CD4-positive, alpha-beta T cell (primary cell): ENCODE measurements at regions of chr6 and their contacts with region 1.

Region 1: DNA sequence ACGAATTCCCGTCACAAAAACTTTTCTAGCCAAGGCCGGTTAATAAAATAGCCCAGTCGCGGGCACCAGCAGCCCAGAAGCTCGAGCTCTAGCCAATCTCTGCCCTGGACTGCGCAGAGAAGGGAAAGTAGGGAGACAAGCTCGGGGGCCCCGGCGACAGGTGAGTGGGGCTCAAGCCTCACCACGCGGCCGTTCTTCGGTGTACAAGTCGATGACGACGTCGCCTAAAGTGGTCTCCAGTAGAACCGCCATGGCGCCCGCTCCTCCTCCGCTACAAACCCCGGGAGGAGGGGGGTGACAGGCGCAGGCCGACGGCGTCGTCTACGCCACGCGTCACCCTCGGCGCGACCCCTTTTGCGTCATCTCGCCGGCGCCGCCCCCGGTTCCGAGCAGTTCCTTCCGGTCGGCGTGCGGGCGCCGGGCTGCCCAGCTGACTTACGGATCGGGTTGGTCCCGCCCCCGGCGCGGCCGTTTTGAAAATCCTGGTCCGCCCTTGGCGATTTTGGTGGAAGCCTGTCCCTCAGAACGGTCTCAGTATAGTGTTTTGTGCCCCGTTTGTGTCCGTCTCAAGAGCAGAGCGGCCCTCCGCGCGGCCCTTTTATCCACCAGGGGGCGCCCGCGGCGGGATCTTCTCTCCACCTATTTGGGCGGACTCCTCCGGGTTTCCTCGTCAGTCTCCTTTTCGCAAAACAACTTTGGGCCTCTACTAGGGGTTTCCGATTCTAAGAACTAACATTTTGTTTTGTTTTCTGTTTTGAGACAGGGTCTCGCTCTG is at the start of gene PPIL4:
- DNase-seq: peak; percentile 93 to 99 (median 96)
- ATAC-seq: peak; percentile 82
- H3K4me3 ChIP-seq: peak within 1 kb of the TSS; percentile 69
- H3K4me3 Mint-ChIP-seq: peak within 1 kb of the TSS; percentile 99
- H3K27ac ChIP-seq: peak within 1 kb of the TSS; percentile 98 to 99
- H3K27ac Mint-ChIP-seq: peak within 1 kb of the TSS; percentile 96
- H3K4me1 ChIP-seq: peaks cover 21% of the 10 kb centered on the region
- H3K4me1 Mint-ChIP-seq: peaks cover 37% of the 10 kb centered on the region
- H3K27me3 ChIP-seq: no peaks in the 10 kb centered on the region
- H3K27me3 Mint-ChIP-seq: no peaks in the 10 kb centered on the region
- CTCF ChIP-seq: peak; percentile 99
- total RNA-seq, gene PPIL4: 51.8 to 53.5 TPM

Region 2: GRCh38 chr6:149211046-149211571 is 334.8 kb before region 1 on chr6:
- CTCF ChIA-PET with region 1: no interaction called
- POLR2A ChIA-PET with region 1: no interaction called
- intact Hi-C with region 1: no loop called
- DNase-seq: peak in 4 of 14 experiments; percentile 45 to 53 (median 46)
- ATAC-seq: no peak
- H3K4me3 ChIP-seq: no peak overlapping the region
- H3K4me3 Mint-ChIP-seq: no peak overlapping the region
- H3K27ac ChIP-seq: no peak overlapping the region
- H3K27ac Mint-ChIP-seq: peak overlapping the region; percentile 28
- H3K4me1 ChIP-seq: peaks cover 31% of the 10 kb centered on the region
- H3K4me1 Mint-ChIP-seq: peaks cover 23% of the 10 kb centered on the region
- H3K27me3 ChIP-seq: no peaks in the 10 kb centered on the region
- H3K27me3 Mint-ChIP-seq: no peaks in the 10 kb centered on the region
- CTCF ChIP-seq: no peak

Region 3: DNA sequence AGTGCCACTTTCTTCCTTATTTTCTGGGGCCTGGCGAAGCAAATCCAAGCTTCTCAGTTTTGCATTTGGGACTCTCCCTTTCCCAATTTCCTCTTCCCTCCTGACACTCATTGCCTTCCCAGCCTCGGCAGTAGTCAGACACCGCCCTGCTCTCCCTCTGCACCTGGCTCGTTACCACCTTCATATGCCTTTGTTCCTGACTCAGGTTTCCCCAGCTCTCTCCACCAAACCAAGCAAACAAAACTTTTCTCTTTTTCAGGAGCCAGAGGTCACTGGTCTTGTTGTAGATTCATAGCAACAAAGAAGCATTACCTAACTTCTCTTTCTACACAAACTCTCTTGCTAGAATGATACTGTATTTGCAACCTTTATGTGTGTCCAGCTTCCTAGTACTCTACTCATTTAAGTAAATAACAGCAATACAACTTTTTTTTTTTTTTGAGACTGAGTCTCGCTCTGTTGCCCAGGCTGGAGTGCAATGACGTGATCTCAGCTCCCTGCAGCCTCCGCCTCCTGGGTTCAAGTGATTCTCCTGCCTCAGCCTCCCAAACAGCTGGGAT is 52.1 kb before region 1 on chr6:
- CTCF ChIA-PET with region 1: interaction called, 5 read pairs
- POLR2A ChIA-PET with region 1: interaction called, 16 read pairs
- intact Hi-C with region 1: no loop called
- DNase-seq: no peak
- ATAC-seq: no peak
- H3K4me3 ChIP-seq: no peak overlapping the region
- H3K4me3 Mint-ChIP-seq: no peak overlapping the region
- H3K27ac ChIP-seq: peak overlapping the region; percentile 81 to 93
- H3K27ac Mint-ChIP-seq: peak overlapping the region; percentile 89
- H3K4me1 ChIP-seq: peaks cover 55% of the 10 kb centered on the region
- H3K4me1 Mint-ChIP-seq: peaks cover 60% of the 10 kb centered on the region
- H3K27me3 ChIP-seq: no peaks in the 10 kb centered on the region
- H3K27me3 Mint-ChIP-seq: no peaks in the 10 kb centered on the region
- CTCF ChIP-seq: no peak

Region 4: DNA sequence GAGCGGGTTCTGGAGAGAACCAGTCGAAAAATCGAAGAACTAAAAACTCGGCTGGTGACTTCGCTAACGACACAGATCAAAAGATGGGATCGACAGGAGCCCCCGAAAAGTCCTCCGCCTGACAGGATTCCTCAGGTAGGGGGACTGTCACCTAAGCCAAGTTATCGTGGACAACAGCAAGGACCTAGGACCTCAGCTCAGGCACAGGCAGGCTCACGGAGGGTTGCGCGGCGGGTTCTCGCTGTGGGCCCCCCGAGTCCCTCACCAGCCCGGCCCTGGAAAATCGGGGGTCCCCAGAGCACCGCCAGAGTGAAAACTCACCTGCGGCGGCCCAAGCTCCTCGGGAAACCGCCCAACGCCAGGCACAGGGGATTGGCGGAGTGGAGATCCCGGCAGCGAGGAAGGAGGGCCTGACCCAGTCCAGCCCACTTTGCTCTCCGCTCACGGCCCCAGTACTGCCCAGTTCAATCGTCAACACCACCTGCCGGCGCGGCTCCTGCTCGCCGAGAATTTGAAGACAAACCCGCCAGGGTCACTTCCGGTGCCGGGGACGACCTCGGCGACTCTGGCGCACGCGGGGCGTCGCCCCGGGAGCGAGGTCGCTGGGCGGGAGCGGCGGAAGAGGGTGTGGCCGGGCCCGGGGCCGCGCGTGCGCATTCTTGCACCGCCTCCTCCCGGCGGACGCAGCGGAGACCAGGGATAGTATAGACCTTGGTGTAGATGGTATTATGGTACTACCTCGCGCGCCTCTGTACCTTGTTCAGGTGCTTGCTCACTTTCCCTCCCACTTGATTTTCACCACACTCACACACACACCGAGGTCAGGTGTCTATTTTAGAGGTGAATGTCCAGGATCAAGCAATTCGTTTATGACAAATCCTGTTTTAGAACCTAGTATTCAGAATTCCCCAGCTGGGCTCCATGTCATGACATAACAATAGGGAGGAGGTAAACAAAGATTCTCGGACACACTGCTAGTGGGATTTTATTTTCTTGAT is 102.5 kb after region 1 on chr6 and contains the start of gene KATNA1:
- CTCF ChIA-PET with region 1: no interaction called
- POLR2A ChIA-PET with region 1: interaction called, 4 read pairs
- intact Hi-C with region 1: loop called in 1 of 2 experiments (anchors 2 kb)
- DNase-seq: peak; percentile 69 to 93 (median 82)
- ATAC-seq: peak; percentile 88
- H3K4me3 ChIP-seq: peak within 1 kb of the TSS; percentile 100
- H3K4me3 Mint-ChIP-seq: peak within 1 kb of the TSS; percentile 90
- H3K27ac ChIP-seq: peak within 1 kb of the TSS; percentile 66 to 85
- H3K27ac Mint-ChIP-seq: peak within 1 kb of the TSS; percentile 84
- H3K4me1 ChIP-seq: peaks cover 13% of the 10 kb centered on the region
- H3K4me1 Mint-ChIP-seq: peaks cover 41% of the 10 kb centered on the region
- H3K27me3 ChIP-seq: no peaks in the 10 kb centered on the region
- H3K27me3 Mint-ChIP-seq: no peaks in the 10 kb centered on the region
- CTCF ChIP-seq: no peak
- total RNA-seq, gene KATNA1: 17.0 to 18.1 TPM

Region 5: GRCh38 chr6:149746147-149746946 is 200.4 kb after region 1 on chr6 and contains the start of gene NUP43:
- CTCF ChIA-PET with region 1: no interaction called
- POLR2A ChIA-PET with region 1: interaction called, 5 read pairs
- intact Hi-C with region 1: loop called (anchors 5 kb)
- DNase-seq: peak; percentile 86 to 95 (median 91)
- ATAC-seq: peak; percentile 74
- H3K4me3 ChIP-seq: peak within 1 kb of the TSS; percentile 95
- H3K4me3 Mint-ChIP-seq: peak within 1 kb of the TSS; percentile 97
- H3K27ac ChIP-seq: peak within 1 kb of the TSS; percentile 59 to 65
- H3K27ac Mint-ChIP-seq: peak within 1 kb of the TSS; percentile 96
- H3K4me1 ChIP-seq: peaks cover 38% of the 10 kb centered on the region
- H3K4me1 Mint-ChIP-seq: peaks cover 32% of the 10 kb centered on the region
- H3K27me3 ChIP-seq: no peaks in the 10 kb centered on the region
- H3K27me3 Mint-ChIP-seq: no peaks in the 10 kb centered on the region
- CTCF ChIP-seq: peak; percentile 67
- total RNA-seq, gene NUP43: 14.2 to 14.5 TPM

Region 6: GRCh38 chr6:150016324-150017185 is 470.6 kb after region 1 on chr6:
- CTCF ChIA-PET with region 1: no interaction called
- POLR2A ChIA-PET with region 1: no interaction called
- intact Hi-C with region 1: loop called in 1 of 2 experiments (anchors 10 kb)
- DNase-seq: peak in 13 of 14 experiments; percentile 30 to 84 (median 42)
- ATAC-seq: peak; percentile 92
- H3K4me3 ChIP-seq: no peak overlapping the region
- H3K4me3 Mint-ChIP-seq: no peak overlapping the region
- H3K27ac ChIP-seq: no peak overlapping the region
- H3K27ac Mint-ChIP-seq: no peak overlapping the region
- H3K4me1 ChIP-seq: peaks cover 14% of the 10 kb centered on the region
- H3K4me1 Mint-ChIP-seq: peaks cover 19% of the 10 kb centered on the region
- H3K27me3 ChIP-seq: peaks cover 38 to 53% of the 10 kb centered on the region in 2 experiments
- H3K27me3 Mint-ChIP-seq: peaks cover 82% of the 10 kb centered on the region
- CTCF ChIP-seq: peak; percentile 75